Testis (tissue), 5 donors: ENCODE measurements at regions of chr4 and their contacts with region 1.

Region 1: GRCh38 chr4:173505924-173506518 is 24.0 kb downstream of the HAND2 start:
- DNase-seq: peak; percentile 81
- H3K4me3 ChIP-seq: no peak overlapping the region
- H3K27ac ChIP-seq: no peak overlapping the region
- H3K4me1 ChIP-seq: no peaks in the 10 kb centered on the region
- H3K27me3 ChIP-seq: no peaks in the 10 kb centered on the region
- CTCF ChIP-seq: peak in 2 of 3 experiments; percentile 42 to 52
- POLR2A ChIP-seq: no peak

Region 2: DNA sequence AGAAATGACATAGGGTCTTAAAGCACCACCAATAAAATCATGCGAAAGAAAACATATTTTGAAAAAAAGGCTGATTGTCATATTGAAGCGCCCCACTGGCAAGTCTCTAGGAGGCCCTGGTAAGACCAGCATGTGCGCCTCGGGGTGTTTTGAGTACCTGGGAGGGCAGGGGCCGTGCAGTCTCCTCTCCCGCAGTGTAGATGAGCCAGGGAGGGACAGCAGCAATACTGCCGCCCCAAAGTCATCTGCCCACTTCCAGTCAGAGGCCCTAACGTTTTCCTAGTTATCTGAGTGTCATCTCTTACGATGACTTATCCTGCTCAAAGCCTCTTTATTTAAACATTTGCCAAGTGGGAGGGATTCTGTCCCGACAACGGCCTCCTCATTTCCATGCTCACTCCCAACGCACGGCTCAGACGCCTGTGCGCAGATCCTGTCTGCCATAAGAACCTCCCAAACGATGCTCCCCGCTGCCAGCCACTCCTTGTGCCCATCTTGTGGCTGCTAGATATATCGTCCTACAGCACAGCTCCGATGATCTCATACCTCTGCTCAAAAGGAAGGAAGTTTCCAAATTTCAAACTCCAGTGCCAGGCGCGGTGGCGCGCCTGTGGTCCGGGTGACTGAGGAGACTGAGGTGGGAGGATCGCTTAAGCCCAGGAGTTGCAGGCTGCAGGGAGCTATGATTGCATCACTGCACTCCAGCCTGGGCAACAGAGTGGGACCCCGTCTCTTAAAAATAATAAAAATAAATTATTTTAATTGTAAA is 90.0 kb before region 1 on chr4:
- intact Hi-C with region 1: no loop called
- DNase-seq: peak; percentile 43
- H3K4me3 ChIP-seq: no peak overlapping the region
- H3K27ac ChIP-seq: peak overlapping the region in 1 of 2 donors; percentile 6
- H3K4me1 ChIP-seq: no peaks in the 10 kb centered on the region
- H3K27me3 ChIP-seq: no peaks in the 10 kb centered on the region
- CTCF ChIP-seq: no peak
- POLR2A ChIP-seq: no peak

Region 3: GRCh38 chr4:174156239-174156826 is 650.3 kb after region 1 on chr4:
- intact Hi-C with region 1: loop called (anchors 10 kb)
- DNase-seq: no peak
- H3K4me3 ChIP-seq: no peak overlapping the region
- H3K27ac ChIP-seq: no peak overlapping the region
- H3K4me1 ChIP-seq: no peaks in the 10 kb centered on the region
- H3K27me3 ChIP-seq: no peaks in the 10 kb centered on the region
- CTCF ChIP-seq: peak in 2 of 3 experiments; percentile 52 to 64
- POLR2A ChIP-seq: no peak